ENCODE measurements at regions of chr12 and their contacts with region 1.

Region 1: GRCh38 chr12:27747111-27747820 is 32.8 kb upstream of the KLHL42 start:
- DNase-seq: no peak
- H3K4me3 Mint-ChIP-seq: no peak overlapping the region
- H3K27ac Mint-ChIP-seq: peak overlapping the region; percentile 39
- H3K4me1 Mint-ChIP-seq: peaks cover 40% of the 10 kb centered on the region
- H3K27me3 Mint-ChIP-seq: no peaks in the 10 kb centered on the region
- CTCF ChIP-seq: no peak

Region 2: GRCh38 chr12:27821259-27821973 is 74.2 kb after region 1 on chr12:
- CTCF ChIA-PET with region 1: interaction called, 4 read pairs
- intact Hi-C with region 1: loop called (anchors 5 kb)
- DNase-seq: peak; percentile 70
- H3K4me3 Mint-ChIP-seq: no peak overlapping the region
- H3K27ac Mint-ChIP-seq: no peak overlapping the region
- H3K4me1 Mint-ChIP-seq: peaks cover 7% of the 10 kb centered on the region
- H3K27me3 Mint-ChIP-seq: no peaks in the 10 kb centered on the region
- CTCF ChIP-seq: peak; percentile 75

Region 3: DNA sequence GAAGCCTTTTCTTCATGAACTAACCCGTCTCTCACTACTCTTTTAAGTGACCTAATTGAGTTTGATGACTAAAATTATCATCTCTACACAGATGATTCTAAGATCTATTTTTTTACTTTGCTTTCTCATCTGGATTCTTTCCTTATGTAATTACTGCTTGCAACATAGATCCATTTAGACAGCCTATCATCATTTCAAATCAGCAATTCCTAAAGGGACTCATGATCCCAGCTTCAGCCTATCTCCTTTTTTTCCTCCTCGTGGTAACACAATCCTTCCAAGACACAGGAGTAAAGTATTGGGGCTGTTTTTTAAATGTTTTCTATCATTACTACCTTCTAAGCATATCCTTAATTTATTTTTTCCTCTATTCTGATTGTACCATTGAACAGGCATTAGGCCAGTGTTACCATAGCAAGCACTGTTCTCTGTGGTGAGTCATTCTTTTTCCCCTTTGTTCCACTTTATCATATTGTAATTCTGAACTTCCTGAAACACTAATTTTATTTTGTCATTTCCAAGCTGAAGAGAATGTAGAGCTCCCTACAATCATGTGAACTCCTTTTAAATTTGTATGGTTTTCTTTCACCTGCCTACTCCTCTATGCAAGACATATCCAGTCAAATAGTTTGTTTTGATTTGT is 1211.4 kb after region 1 on chr12:
- CTCF ChIA-PET with region 1: no interaction called
- intact Hi-C with region 1: loop called (anchors 5 kb)
- DNase-seq: no peak
- H3K4me3 Mint-ChIP-seq: no peak overlapping the region
- H3K27ac Mint-ChIP-seq: peak overlapping the region; percentile 33
- H3K4me1 Mint-ChIP-seq: peaks cover 12% of the 10 kb centered on the region
- H3K27me3 Mint-ChIP-seq: no peaks in the 10 kb centered on the region
- CTCF ChIP-seq: no peak